ENCODE measurements at regions of chr17 and their contacts with region 1.

Region 1: DNA sequence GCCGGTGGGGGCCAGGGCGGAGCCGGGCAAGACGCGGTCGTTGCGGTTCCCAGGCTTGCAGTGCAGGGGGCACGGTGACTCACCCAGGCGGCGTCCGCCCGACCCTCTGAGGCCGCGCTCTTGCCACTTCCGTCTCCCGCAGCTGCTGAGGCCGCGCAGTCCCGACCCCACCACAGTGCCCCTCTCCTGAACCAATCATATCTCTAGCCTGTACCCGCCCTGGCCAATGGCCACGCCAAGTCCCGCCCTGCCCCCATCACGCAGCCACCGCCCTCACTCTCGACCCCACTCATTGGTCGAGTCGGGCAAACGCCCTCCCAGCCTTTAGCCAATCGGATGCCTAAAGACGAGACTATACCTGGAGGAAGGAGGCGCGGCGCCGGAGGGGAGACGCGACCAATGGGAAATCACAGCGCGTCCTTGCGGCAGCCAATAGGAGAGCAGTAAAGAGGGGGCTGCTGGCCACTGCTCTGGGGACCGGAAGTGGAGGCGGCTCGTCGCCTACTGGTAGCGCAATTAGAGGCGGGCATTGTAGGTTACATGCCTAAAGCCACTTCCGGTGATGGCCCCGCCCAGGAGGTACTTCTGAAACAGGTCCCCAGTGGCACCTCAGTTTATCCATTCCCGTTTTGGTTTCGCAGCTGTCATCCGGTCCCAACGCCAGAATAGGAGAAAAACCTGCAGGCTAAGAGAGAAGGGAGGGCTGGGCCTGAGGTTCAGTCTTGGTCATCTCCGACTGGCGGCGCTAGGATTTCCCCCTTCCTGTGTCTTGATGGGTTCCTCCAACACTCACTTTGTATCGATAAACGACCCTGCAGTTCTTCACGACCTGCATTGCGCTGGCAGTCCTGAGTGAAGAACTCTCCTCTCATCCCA is 3.5 kb upstream of the MTMR4 start:
- DNase-seq: peak; percentile 100
- ATAC-seq: peak; percentile 86
- H3K4me3 Mint-ChIP-seq: peak overlapping the region; percentile 86
- H3K27ac Mint-ChIP-seq: peak overlapping the region; percentile 93
- H3K4me1 Mint-ChIP-seq: peaks cover 49% of the 10 kb centered on the region
- H3K27me3 Mint-ChIP-seq: peaks cover 3% of the 10 kb centered on the region

Region 2: DNA sequence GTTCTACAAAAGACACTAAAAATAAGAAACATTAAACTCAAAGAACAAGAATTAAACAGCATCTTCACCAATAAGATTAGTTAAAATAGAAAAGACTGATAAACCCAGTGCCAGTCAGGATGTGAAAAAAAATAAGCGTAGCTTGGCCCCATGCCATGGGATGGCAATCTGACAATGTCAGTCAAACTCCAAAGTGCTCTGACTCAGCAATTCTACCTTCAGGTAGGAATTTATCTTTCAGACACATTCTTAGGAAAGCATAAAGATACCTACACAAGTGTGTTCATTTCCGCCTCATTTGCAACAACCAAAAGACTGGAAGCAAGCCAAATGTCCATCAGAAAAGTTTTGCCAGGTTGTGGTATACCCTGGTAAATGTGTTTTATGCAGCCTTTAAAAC is 228.1 kb before region 1 on chr17:
- CTCF ChIA-PET with region 1: no interaction called
- DNase-seq: peak; percentile 9
- ATAC-seq: no peak
- H3K4me3 Mint-ChIP-seq: no peak overlapping the region
- H3K27ac Mint-ChIP-seq: no peak overlapping the region
- H3K4me1 Mint-ChIP-seq: no peaks in the 10 kb centered on the region
- H3K27me3 Mint-ChIP-seq: peaks cover 52% of the 10 kb centered on the region

Region 3: GRCh38 chr17:58352014-58352842 is 165.7 kb before region 1 on chr17 and contains the start of gene SUPT4H1:
- CTCF ChIA-PET with region 1: no interaction called
- DNase-seq: peak; percentile 93
- ATAC-seq: peak; percentile 92
- H3K4me3 Mint-ChIP-seq: peak within 1 kb of the TSS; percentile 98
- H3K27ac Mint-ChIP-seq: peak within 1 kb of the TSS; percentile 96
- H3K4me1 Mint-ChIP-seq: peaks cover 50% of the 10 kb centered on the region
- H3K27me3 Mint-ChIP-seq: no peaks in the 10 kb centered on the region
- total RNA-seq, gene SUPT4H1: 63.3 to 127 TPM

Region 4: GRCh38 chr17:58531661-58532554 is 13.9 kb after region 1 on chr17:
- CTCF ChIA-PET with region 1: interaction called, 30 read pairs
- DNase-seq: peak; percentile 63
- ATAC-seq: peak; percentile 94
- H3K4me3 Mint-ChIP-seq: peak overlapping the region; percentile 23
- H3K27ac Mint-ChIP-seq: no peak overlapping the region
- H3K4me1 Mint-ChIP-seq: peaks cover 9% of the 10 kb centered on the region
- H3K27me3 Mint-ChIP-seq: peaks cover 57% of the 10 kb centered on the region

Region 5: DNA sequence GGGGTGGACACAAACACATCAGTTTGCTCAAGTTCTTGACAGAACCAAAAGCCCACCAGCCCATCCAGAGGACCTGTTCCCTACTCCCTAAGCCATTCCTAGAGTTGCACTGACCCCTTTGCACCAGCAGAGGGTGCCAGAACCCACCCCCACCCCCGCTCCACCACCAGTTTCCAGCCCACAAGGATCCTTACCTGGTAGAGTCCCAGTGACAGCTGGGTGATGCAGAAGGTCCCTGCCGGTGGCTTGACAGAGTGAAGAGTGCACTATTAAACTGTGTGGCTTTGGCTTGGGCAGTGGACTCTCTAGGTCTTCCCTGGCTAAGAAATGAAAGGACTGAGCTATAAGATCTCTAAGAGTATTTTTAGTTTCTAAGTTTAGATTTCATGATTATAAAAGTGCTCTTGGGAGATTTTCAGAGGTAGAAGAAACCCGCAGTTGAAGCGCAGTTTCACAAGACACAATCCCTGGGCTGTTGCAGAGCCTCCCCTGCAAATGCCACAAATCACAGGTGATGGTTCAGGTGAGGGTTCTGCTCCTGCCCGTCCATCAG is 69.8 kb after region 1 on chr17:
- CTCF ChIA-PET with region 1: interaction called, 10 read pairs
- DNase-seq: peak; percentile 66
- ATAC-seq: peak; percentile 76
- H3K4me3 Mint-ChIP-seq: no peak overlapping the region
- H3K27ac Mint-ChIP-seq: no peak overlapping the region
- H3K4me1 Mint-ChIP-seq: peaks cover 1% of the 10 kb centered on the region
- H3K27me3 Mint-ChIP-seq: peaks cover 15% of the 10 kb centered on the region

Region 6: DNA sequence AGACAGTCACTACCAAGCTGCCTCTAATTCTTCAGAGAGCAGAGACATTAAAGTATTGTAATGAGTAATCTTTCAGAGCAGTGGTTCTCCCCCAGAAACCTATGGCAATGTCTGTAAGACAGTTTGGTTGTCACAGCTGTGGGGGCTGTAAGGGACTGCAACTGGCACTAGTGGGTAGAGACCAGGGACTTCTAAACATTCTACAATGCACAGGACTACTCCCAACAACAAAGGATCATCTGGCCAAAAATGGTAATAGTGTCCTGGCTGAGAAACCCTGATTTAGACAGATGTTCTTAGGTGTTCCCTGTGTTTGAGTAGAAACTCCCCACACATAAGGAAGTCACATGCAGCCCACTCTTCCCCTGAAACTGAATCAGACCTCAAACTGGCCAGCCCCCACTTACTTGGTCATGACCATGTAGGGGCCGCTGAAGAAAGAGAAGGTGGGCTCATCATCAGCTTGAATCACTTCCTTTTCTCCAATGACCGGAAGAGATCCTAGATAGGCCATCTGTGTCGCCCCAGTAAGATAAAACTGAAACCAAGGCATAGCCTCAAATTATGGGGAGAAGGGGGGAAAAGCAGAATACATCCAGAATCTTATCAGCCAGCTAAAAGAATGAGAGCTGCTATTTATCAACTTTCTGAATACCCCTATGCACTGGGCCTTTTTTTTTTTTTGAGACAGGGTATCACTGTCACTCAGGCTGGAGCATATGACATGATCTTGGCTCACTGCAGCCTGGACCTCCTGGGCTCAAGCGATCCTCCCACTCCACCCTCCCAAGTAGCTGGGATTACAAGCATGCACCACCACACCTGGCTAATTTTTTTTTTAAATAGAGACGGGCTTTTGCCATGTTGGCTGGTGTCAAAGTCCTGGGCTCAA is 98.0 kb after region 1 on chr17:
- CTCF ChIA-PET with region 1: no interaction called
- DNase-seq: peak; percentile 52
- ATAC-seq: peak; percentile 80
- H3K4me3 Mint-ChIP-seq: peak overlapping the region; percentile 18
- H3K27ac Mint-ChIP-seq: peak overlapping the region; percentile 79
- H3K4me1 Mint-ChIP-seq: peaks cover 51% of the 10 kb centered on the region
- H3K27me3 Mint-ChIP-seq: no peaks in the 10 kb centered on the region

Region 7: DNA sequence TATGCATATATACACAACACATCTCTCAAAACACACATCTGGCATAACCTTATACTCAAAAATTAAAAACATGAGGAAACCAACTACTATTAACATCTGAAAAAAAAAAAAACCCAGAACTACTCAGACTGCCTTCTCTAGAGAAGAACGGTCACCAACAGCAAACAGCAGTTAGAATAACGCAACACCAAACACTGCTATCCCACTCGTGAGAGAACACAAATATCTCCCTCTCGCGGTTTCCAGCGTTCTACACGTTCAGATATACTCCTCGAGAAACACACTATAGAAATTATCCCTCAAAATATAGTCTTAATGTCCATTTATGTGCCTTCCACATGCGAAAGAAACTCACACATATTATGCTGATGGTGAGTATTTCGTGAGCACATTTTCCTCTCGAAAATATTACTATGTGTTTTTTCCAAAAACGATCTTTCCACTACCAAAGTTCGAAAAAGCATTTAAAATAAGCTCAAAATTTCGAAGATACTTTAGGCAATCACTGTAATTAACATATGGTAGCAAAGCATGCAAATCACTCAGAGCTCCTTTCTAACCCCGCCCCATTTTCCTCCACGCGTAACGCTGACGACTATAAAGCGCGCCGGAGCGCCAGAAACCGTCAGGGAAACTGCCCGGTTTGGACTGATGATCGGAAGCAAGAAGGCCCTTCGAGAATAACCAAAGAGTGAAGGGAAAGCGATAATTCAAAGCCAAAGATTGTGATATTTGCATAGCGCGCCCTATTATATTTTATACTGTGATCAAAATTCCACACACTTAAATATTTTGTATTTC is 113.8 kb after region 1 on chr17:
- CTCF ChIA-PET with region 1: interaction called, 13 read pairs
- DNase-seq: peak; percentile 97
- ATAC-seq: peak; percentile 89
- H3K4me3 Mint-ChIP-seq: no peak overlapping the region
- H3K27ac Mint-ChIP-seq: no peak overlapping the region
- H3K4me1 Mint-ChIP-seq: peaks cover 3% of the 10 kb centered on the region
- H3K27me3 Mint-ChIP-seq: no peaks in the 10 kb centered on the region

Region 8: GRCh38 chr17:58786613-58787295 is 268.8 kb after region 1 on chr17:
- CTCF ChIA-PET with region 1: no interaction called
- DNase-seq: no peak
- ATAC-seq: no peak
- H3K4me3 Mint-ChIP-seq: no peak overlapping the region
- H3K27ac Mint-ChIP-seq: no peak overlapping the region
- H3K4me1 Mint-ChIP-seq: peaks cover 3% of the 10 kb centered on the region
- H3K27me3 Mint-ChIP-seq: peaks cover 6% of the 10 kb centered on the region

Measured in activated CD8-positive, alpha-beta memory T cell treated with anti-CD3 and anti-CD28 coated beads, Interleukin-2, amount 10 ng/mL, durations not matched to agents 7 days and 5 days (primary cell).